Breast epithelium (tissue), 4 donors: ENCODE measurements at regions of chr1 and their contacts with region 1.

Region 1: GRCh38 chr1:94014635-94015488 is 105.6 kb upstream of the GCLM start:
- DNase-seq: no peak
- H3K4me3 ChIP-seq: no peak overlapping the region
- H3K27ac ChIP-seq: no peak overlapping the region
- H3K4me1 ChIP-seq: no peaks in the 10 kb centered on the region
- H3K27me3 ChIP-seq: no peaks in the 10 kb centered on the region
- CTCF ChIP-seq: no peak
- POLR2A ChIP-seq: no peak

Region 2: DNA sequence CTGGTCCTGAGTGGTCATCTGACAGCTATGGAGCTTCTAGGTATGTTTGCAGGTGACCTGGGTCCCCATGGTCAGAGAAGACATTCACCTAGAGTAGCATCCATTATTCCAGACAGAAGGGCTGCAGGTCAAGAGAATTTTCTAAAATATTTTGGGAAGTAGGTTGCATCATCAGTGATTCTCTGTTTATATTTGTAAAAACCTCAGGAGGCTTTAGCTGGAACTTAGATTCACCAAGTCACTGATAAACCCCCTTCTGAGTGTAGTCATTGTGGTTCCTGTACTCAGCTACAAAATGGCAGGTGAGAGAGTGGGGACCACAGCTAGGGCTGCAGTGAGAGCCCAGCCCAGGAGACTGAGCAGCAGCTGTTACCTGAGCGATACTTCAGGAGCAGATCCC is 27.5 kb after region 1 on chr1:
- intact Hi-C with region 1: loop called (anchors 1 kb)
- DNase-seq: no peak
- H3K4me3 ChIP-seq: no peak overlapping the region
- H3K27ac ChIP-seq: no peak overlapping the region
- H3K4me1 ChIP-seq: peaks cover 0 to 19% of the 10 kb centered on the region in 2 donors
- H3K27me3 ChIP-seq: no peaks in the 10 kb centered on the region
- CTCF ChIP-seq: no peak
- POLR2A ChIP-seq: no peak